ENCODE measurements at regions of chr1 and their contacts with region 1.

Region 1: GRCh38 chr1:58979086-58979485 is 195.2 kb upstream of the JUN start:
- DNase-seq: no peak
- H3K4me3 Mint-ChIP-seq: no peak overlapping the region
- H3K27ac Mint-ChIP-seq: no peak overlapping the region
- H3K4me1 Mint-ChIP-seq: peaks cover 27% of the 10 kb centered on the region
- H3K27me3 Mint-ChIP-seq: no peaks in the 10 kb centered on the region

Region 2: GRCh38 chr1:58968360-58968952 is 10.6 kb before region 1 on chr1:
- CTCF ChIA-PET with region 1: interaction called, 16 read pairs
- POLR2A ChIA-PET with region 1: no interaction called
- DNase-seq: peak; percentile 64
- H3K4me3 Mint-ChIP-seq: peak overlapping the region; percentile 35
- H3K27ac Mint-ChIP-seq: peak overlapping the region; percentile 99
- H3K4me1 Mint-ChIP-seq: peaks cover 42% of the 10 kb centered on the region
- H3K27me3 Mint-ChIP-seq: peaks cover 3% of the 10 kb centered on the region

Measured in activated CD4-positive, alpha-beta T cell treated with anti-CD3 and anti-CD28 coated beads, Interleukin-2, amount 10 ng/mL, durations not matched to agents 7 days and 5 days (primary cell).